GM18951 (cell line): ENCODE measurements at regions of chr1 and their contacts with region 1.

Region 1: GRCh38 chr1:11842154-11843041 is 5.2 kb downstream of the NPPA start:
- POLR2A ChIP-seq: no peak

Region 2: DNA sequence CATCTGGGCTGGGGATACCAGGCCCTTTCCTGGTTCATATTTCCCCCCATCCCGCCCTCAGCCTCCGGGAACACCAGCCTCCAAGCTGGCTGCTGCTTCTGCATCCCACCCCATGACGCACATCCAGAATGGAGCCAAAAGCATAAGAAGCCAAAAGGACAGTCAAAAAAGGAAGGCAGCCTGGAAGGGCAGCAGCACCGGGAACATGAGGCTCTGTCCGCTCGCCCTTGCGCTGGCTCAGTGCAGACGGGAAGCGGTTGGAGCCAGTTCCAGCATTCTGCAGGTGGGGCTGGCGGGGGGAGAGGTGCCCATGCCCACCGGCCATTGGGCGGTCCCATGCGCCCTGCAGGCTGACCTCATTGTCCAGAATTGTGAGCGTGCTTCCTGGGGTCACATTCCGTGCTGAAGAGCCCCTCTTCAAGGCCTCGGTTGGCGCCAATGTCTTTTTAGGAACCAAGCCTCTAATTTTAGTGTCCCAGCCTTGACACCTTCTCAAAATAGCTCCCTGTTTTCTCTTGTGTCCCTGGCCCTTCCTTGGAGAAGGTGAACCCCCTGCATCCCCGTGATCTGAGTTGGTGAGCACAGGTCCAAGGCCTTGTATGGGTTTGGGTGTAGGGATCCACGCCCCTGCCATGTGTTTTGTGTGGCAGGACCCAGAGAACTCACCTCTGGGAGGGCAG is 44.7 kb after region 1 on chr1:
- in situ Hi-C with region 1: loop called (anchors 5 kb)
- POLR2A ChIP-seq: no peak